Left cardiac atrium (tissue), 4 donors: ENCODE measurements at regions of chr3 and their contacts with region 1.

Region 1: DNA sequence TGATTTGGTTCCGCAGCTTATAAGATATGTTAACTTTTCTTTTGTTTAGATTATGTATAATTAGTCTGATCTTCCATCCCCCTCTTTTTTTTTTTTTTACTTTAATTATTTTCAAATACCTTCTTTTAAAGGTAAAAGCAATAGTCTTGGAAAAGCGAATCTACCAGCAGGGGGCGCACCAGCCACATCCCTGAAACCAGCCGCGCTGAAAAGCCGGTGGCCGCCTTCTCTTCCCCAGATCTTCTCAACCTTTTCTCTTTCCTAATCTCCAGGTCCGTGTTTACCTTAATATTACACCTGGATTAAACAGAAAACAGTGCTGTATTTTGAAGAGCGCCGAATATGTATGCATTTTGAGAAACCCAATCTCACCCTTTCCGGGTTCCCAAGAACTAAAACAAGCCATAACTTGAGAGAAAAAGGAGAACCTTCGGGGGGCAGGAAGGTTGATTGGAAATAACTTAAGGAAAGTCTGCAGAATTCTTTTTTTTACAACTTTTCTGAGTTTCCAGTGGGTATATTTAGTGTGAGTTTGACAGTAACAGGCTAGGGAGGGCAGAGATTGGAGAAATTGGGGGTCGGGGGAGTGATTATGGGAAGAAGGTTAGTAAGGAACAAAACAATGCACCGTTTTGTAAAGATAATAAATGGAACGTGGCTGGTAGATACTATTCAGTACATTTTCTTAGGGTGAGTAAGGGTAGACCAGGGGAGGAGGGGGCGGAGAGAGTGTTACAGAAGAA is 2.0 kb upstream of the SOX2 start:
- DNase-seq: peak; percentile 77
- ATAC-seq: no peak

Region 2: GRCh38 chr3:182248351-182248880 is 538.7 kb after region 1 on chr3:
- intact Hi-C with region 1: loop called (anchors 5 to 10 kb)
- DNase-seq: no peak
- ATAC-seq: no peak

Region 3: DNA sequence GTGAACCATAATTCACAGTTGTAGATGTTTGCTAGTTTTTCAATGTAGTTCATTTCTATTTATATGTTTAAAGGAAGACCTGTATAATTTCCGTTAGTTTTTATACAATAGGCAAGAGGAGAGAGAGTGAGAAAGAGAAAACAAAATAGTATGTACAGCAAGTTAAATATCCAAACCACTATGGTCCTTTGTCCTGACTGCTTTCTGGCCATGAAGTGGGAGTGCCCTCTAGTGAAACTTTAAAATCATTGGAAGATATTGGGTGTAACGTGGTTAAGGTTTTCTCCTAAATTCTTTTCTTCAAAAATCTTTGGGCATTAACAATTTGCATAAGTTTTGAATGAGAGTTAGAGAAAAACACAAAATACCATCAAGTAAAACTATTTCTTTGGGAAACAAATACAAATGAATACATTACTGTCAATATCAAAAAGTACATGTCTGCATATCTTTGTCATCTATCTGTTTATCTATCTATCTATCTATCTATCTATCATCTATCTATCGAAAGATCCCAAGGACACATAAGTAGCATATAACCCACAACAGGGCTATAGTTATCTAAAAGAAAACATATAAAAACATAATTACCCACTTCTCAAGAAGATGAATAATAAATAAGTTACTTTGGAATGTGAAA is 549.0 kb after region 1 on chr3:
- intact Hi-C with region 1: loop called (anchors 5 to 10 kb)
- DNase-seq: no peak
- ATAC-seq: peak in 1 of 2 donors; percentile 67